ENCODE measurements at regions of chr16 and their contacts with region 1.

Region 1: DNA sequence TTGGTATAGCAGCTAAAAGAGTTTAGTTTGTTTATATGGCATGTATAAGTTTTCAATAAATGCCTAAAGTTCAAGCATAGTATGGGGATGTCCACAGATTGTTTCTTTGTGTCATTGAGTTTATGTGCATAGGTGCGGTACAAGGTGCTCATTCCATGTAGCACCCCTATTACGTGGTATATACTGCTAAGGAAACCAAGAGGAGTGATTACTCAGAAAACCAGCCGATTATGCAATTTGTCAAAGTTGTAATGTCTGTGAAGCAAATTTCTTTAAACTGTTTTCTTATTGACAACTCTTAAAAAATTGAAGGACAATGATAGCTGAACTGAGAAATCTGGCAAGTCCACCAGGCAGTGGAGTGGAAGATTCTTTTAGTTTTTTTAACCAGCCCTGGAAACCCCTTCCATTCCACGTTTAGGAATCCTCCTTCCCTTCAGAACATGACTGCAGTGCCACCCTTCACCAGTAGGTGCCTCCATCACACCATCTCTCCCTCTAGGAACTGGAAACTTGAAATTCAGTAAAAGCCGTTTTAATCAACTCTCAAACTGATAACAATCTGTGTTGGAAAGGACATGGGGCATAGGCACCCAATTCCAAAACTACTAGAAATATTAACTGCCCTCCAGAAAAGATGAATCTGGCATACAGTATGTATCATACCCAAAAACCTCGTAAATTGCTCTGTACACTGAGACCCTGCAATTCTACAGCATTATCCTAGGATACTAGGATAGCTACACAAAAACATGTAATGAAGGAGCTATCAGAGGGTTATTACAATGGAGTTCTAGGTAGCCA is 43.5 kb downstream of the REXO5 start:
- DNase-seq: peak; percentile 80

Region 2: GRCh38 chr16:20327444-20328041 is 522.2 kb before region 1 on chr16 and contains the start of gene GP2:
- in situ Hi-C with region 1: no loop called
- DNase-seq: no peak

Region 3: GRCh38 chr16:21083729-21084268 is 234.0 kb after region 1 on chr16:
- in situ Hi-C with region 1: loop called (anchors 10 kb)
- DNase-seq: peak; percentile 76

Region 4: DNA sequence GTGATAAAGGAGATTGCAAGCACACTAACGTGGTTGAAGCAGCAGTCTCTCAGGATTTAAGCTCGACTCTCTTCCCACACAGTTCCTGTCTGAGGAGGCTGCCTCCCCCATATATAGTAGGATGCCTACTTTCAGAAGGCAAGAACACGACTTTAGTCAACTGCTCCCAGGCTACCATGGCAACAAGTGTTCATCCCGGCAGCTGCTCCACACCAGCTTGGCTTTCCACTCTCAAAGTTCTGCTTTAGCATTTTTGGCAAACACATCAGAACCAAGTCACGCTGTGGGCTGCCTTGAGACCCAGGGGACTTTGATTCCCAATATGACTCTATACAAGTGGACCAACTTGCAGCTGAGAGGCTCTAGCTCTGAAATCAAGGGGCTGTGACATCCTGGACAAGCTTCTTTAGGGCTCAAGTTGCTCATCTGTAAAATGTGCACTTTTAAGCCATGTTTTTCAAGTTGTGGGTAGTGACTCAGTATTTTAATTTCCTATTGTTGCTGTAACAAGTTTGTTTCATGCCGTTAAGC is 345.0 kb after region 1 on chr16:
- in situ Hi-C with region 1: no loop called
- DNase-seq: no peak